ENCODE measurements at regions of chr17 and their contacts with region 1.

Region 1: GRCh38 chr17:61635913-61636432 is 45.0 kb upstream of the NACA2 start:
- DNase-seq: peak; percentile 14 to 68 (median 16)
- ATAC-seq: peak; percentile 54; the same call in 1 of the 3 replicates
- H3K4me3 ChIP-seq: no peak overlapping the region
- H3K27ac ChIP-seq: no peak overlapping the region
- H3K4me1 ChIP-seq: no peaks in the 10 kb centered on the region
- H3K27me3 ChIP-seq: no peaks in the 10 kb centered on the region; a peak in 1 of 5 replicates
- CTCF ChIP-seq: peak; percentile 66 to 78 (median 71); a peak in 5 of 6 replicates
- EP300 ChIP-seq: no peak
- POLR2A ChIP-seq: no peak
- RAD21 ChIP-seq: peak; percentile 74 to 93

Region 2: GRCh38 chr17:61837175-61838051 is 201.4 kb after region 1 on chr17:
- CTCF ChIA-PET with region 1: interaction called, 14 read pairs
- POLR2A ChIA-PET with region 1: interaction called, 5 read pairs
- in situ Hi-C with region 1: loop called (anchors 5 kb)
- intact Hi-C with region 1: loop called (anchors 1 kb)
- DNase-seq: peak; percentile 40 to 77 (median 45)
- ATAC-seq: peak; percentile 91
- H3K4me3 ChIP-seq: no peak overlapping the region
- H3K27ac ChIP-seq: no peak overlapping the region
- H3K4me1 ChIP-seq: no peaks in the 10 kb centered on the region
- H3K27me3 ChIP-seq: no peaks in the 10 kb centered on the region
- CTCF ChIP-seq: peak; percentile 63 to 85 (median 73)
- EP300 ChIP-seq: no peak
- POLR2A ChIP-seq: no peak
- RAD21 ChIP-seq: peak; percentile 75 to 86